Activated B cell treated with CpG ODN at 0.5 μM for 24 hours (primary cell): ENCODE measurements at regions of chr2 and their contacts with region 1.

Region 1: DNA sequence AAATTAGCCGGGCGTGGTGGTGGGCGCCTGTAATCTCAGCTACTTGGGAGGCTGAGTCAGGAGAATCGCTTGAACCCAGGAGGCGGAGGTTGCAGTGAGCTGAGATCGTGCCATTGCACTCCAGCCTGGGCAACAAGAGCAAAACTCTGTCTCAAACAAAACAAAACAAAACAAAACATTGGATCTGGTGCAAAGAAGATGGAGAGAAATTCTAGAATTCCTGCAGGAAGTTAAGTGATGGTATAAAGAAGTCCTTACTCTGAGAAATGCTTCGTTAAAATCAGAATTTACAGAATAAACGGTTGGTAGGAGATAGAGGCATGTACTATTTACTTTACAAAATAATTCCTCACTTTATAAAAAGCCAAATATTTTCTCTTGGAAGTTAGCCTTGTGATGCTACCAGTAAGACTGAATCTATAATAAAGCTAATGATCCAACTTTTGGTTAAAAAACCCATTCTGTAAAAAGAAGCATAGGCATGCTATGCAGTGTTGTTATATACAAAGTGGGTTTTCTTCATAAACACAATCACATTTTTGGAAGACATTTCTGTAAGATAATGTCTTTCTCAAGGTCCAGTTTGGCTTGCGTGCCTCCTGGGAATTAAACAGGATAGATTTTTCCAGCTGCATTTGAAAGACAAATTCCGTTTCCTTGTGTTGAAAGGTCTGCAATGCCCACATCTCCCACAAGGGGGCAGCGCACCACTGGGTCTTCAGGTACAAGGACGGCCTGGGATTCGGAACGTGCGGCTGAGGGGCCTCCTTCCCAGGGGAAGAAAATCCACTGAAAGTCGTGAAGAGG is 35.6 kb upstream of the PNO1 start:
- DNase-seq: peak; percentile 69
- ATAC-seq: peak; percentile 26
- H3K4me3 Mint-ChIP-seq: peak overlapping the region; percentile 77
- H3K27ac Mint-ChIP-seq: peak overlapping the region; percentile 97
- H3K4me1 Mint-ChIP-seq: peaks cover 48% of the 10 kb centered on the region
- H3K27me3 Mint-ChIP-seq: no peaks in the 10 kb centered on the region
- CTCF ChIP-seq: peak; percentile 100

Region 2: GRCh38 chr2:67581751-67582150 is 540.3 kb before region 1 on chr2:
- CTCF ChIA-PET with region 1: no interaction called
- POLR2A ChIA-PET with region 1: no interaction called
- intact Hi-C with region 1: no loop called
- DNase-seq: no peak
- ATAC-seq: no peak
- H3K4me3 Mint-ChIP-seq: no peak overlapping the region
- H3K27ac Mint-ChIP-seq: no peak overlapping the region
- H3K4me1 Mint-ChIP-seq: no peaks in the 10 kb centered on the region
- H3K27me3 Mint-ChIP-seq: no peaks in the 10 kb centered on the region
- CTCF ChIP-seq: no peak

Region 3: GRCh38 chr2:68062680-68063387 is 59.2 kb before region 1 on chr2 and contains the start of gene C1D:
- CTCF ChIA-PET with region 1: interaction called, 5 read pairs
- POLR2A ChIA-PET with region 1: interaction called, 13 read pairs
- intact Hi-C with region 1: loop called (anchors 1 kb)
- DNase-seq: peak; percentile 94
- ATAC-seq: peak; percentile 92
- H3K4me3 Mint-ChIP-seq: peak within 1 kb of the TSS; percentile 93
- H3K27ac Mint-ChIP-seq: peak within 1 kb of the TSS; percentile 95
- H3K4me1 Mint-ChIP-seq: peaks cover 41% of the 10 kb centered on the region
- H3K27me3 Mint-ChIP-seq: peaks cover 2% of the 10 kb centered on the region
- CTCF ChIP-seq: no peak
- total RNA-seq, gene C1D: 21.5 and 25.2 TPM in 2 replicates

Region 4: DNA sequence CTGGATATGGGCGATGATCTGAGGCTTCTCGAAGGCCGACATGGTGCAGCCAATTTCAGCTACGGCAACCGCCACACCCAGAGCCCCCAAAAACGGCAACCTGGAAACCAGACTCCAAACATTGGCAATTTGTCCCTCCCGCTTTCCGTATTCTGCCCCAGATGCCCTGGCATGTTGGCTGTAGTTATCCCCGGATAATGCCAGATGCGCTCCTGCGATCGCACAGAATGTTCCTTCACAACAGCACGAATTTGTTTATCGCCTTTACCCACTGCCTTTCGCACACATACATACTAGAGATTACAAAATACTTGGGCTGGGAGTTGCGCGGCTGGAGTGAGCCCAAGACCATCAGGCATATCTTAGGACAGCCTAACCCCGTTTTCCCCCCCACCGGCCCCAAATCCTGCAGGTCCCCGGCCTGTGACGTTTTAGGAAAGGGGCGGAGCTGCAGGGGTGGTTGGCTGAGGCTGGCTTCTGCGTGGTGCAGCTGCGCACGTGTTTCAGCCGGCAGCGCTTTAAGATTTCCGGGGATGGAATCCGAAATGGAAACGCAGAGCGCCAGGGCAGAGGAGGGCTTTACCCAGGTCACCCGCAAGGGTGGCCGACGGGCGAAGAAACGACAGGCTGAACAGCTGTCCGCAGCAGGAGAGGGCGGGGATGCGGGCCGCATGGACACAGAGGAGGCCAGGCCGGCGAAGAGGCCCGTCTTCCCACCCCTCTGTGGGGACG is 35.5 kb after region 1 on chr2 and contains the start of gene PNO1:
- CTCF ChIA-PET with region 1: interaction called, 13 read pairs
- POLR2A ChIA-PET with region 1: interaction called, 11 read pairs
- intact Hi-C with region 1: loop called (anchors 1 kb)
- DNase-seq: peak; percentile 94
- ATAC-seq: peak; percentile 95
- H3K4me3 Mint-ChIP-seq: peak within 1 kb of the TSS; percentile 99
- H3K27ac Mint-ChIP-seq: peak within 1 kb of the TSS; percentile 100
- H3K4me1 Mint-ChIP-seq: peaks cover 55% of the 10 kb centered on the region
- H3K27me3 Mint-ChIP-seq: no peaks in the 10 kb centered on the region
- CTCF ChIP-seq: no peak
- total RNA-seq, gene PNO1: 22.1 and 24.9 TPM in 2 replicates

Region 5: GRCh38 chr2:68251187-68251854 is 129.2 kb after region 1 on chr2:
- CTCF ChIA-PET with region 1: interaction called, 4 read pairs
- POLR2A ChIA-PET with region 1: no interaction called
- intact Hi-C with region 1: loop called (anchors 1 kb)
- DNase-seq: peak; percentile 41
- ATAC-seq: peak; percentile 66
- H3K4me3 Mint-ChIP-seq: peak overlapping the region; percentile 89
- H3K27ac Mint-ChIP-seq: peak overlapping the region; percentile 92
- H3K4me1 Mint-ChIP-seq: peaks cover 35% of the 10 kb centered on the region
- H3K27me3 Mint-ChIP-seq: no peaks in the 10 kb centered on the region
- CTCF ChIP-seq: no peak

Region 6: GRCh38 chr2:68925295-68925896 is 803.3 kb after region 1 on chr2:
- CTCF ChIA-PET with region 1: interaction called, 5 read pairs
- POLR2A ChIA-PET with region 1: no interaction called
- intact Hi-C with region 1: loop called (anchors 1 kb)
- DNase-seq: no peak
- ATAC-seq: peak; percentile 83
- H3K4me3 Mint-ChIP-seq: no peak overlapping the region
- H3K27ac Mint-ChIP-seq: no peak overlapping the region
- H3K4me1 Mint-ChIP-seq: peaks cover 3% of the 10 kb centered on the region
- H3K27me3 Mint-ChIP-seq: no peaks in the 10 kb centered on the region
- CTCF ChIP-seq: no peak